Posterior vena cava (tissue), 2 donors: ENCODE measurements at regions of chr15 and their contacts with region 1.

Region 1: DNA sequence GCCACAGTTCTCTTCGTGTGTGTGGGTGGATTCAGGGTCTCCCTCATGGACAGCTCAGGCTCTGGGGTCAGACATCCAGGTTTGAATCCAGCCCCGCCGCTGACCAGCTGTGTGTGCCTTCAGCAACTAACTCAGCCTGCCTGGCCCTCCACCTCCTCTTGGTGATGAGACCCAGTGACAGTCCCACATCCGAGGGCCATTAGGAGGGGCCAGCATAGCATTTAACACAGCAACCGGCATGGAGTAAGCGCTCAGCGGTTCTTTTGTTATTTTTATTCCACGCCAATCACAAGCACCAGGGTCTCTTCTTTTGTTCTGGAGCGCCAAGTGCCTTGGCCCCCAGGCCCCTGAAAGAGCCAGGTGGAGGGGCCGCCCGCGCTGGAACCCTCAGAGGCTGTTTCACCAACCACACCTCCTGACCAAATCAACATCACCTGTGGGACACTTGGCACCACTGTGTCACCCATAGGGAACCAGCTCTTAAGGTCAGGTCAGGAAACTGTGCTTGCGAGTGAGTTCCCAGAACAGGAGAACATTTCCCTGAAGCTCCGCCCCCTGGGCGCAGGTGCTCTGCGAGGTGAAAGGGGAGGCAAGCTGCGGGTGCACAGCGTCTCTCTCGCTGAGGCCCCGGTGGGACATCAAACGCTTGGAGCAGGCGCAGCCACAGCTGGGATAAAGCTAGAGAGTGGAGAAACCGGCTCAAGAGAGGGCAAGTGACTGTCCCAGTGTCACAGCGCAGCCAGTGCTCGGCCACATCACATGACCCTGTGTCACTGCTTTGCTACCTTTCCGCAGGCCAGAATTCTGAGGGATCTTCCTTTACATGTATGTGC is 311.3 kb downstream of the UACA start:
- DNase-seq: no peak

Region 2: DNA sequence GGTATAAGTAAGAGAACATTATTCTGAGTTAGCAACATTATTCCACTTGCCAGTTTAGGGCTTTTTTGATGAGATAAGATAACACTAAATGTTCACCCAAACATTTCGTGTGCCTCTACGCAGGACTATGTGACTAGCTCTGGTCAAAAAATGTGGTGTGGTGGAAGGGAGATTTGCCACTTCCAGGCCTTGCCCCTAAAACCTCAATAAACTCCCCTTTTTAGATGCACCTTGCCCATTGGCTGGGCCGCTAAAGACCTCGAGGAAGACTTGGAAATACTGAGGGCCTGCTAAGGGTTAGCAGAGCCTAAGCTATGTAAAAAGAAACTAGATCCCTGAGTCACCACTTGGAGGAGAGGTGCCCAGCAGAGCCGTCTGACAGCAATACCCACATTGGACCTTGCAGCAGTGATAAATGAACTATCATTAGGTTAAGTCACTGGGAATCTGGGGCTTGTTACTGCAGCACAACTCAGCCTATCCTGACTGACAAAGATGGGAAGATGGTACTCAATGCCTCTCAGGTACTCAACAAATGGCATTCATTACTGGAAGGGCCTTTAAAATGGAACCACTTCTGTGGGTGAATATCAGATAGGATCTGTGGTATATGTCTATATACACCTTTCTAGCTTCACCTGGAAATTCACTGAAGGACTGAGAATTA is 22.8 kb before region 1 on chr15:
- intact Hi-C with region 1: loop called in 1 of 2 experiments (anchors 1 kb)
- DNase-seq: no peak